ENCODE measurements at regions of chr20 and their contacts with region 1.

Region 1: DNA sequence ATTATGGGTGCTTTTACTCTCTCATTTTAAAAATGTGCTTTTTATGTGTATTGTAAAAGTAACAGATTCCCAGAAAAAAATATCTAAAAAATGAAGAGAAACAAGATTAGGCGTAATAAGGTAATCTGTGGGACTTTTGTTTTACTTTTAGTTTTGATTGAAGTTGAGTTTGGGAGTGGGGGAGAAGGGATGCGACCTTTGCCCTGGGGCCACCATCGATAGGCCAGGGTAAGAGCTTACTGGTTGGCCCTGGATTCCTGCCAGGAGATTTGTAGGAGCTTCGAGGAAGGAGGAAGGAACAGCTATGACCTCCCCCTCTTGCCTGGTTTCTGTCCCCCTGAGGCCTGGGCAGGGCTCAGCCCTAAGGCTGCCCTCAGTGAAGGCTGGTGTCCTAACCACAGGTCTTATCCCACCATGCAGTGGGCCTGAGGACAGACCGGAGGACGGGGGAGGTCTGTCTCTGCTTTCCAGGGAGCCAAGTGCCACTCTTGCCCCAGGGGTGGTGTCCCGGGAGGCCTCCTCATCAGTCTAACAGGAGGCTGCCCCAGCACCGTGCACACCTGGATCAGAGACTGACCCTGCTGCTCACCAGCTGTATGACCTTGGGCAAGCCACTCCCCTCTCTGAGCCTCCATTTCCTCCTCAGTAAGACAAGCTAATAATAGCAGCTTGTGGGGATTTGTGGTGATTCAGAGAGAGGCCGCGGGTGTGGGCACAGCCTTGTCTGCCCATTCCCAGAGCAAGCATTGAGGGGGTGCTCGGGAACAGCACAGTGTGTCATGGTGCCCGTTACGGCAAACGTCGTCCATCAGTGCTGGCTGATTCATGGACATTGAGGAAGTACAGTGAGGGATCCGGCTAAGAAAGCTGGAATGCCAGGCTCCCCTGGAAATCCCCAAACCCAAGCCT is 21.2 kb downstream of the TGM2 start:
- DNase-seq: peak; percentile 90

Region 2: DNA sequence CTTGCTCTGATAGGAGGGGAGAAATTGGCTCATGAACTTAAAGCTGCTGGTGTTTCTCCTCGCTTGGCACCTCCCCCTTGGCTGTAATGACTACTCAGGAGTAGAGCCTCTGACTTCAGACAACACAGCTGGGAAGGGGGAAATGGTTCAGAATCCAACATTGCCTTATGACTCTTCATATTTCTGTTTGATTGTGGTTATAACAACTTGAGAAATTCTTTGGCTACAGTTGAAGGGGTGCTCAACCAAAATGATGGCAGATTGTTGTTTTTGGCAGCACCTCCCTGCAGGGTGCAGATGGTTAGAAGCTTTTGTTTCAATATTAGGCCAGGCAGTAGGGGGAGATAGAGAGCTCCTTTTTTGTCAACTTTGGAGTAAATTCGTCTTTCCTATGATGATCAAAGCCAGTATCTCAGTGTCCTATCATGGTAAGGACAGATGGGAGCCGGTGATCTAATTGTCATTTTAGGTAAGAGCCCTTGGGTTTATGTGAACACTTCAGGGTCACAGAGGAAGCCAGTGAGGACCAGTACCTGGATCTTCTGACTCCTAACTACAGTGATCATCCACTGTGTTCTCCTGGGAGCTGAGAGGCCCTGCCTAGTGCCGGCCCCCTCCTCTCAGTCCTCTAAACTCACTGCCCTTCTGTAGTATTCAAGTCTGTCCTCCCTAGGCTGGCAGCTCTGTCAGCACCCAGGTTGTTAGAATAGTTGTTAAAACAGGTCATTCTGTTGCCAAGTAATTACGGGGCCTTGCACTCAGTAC is 70.4 kb before region 1 on chr20:
- intact Hi-C with region 1: loop called in 1 of 2 experiments (anchors 10 kb)
- DNase-seq: no peak

Region 3: GRCh38 chr20:38094373-38094891 is 49.5 kb before region 1 on chr20:
- intact Hi-C with region 1: no loop called
- DNase-seq: no peak

Region 4: GRCh38 chr20:38156888-38157634 is 13.2 kb after region 1 on chr20:
- intact Hi-C with region 1: no loop called
- DNase-seq: no peak

Measured in posterior vena cava (tissue), 2 donors.